ENCODE measurements at regions of chrX and their contacts with region 1.

Region 1: GRCh38 chrX:71198066-71198465 is 25.0 kb upstream of the GJB1 start:
- DNase-seq: peak in 3 of 10 donors; percentile 17 to 29 (median 22)
- ATAC-seq: peak; percentile 49 to 56
- H3K4me3 Mint-ChIP-seq: peak overlapping the region; percentile 78 to 94 (median 90)
- H3K27ac Mint-ChIP-seq: peak overlapping the region; percentile 86 to 98 (median 94)
- H3K4me1 Mint-ChIP-seq: peaks cover 15 to 35% (median 30%) of the 10 kb centered on the region in 4 donors
- H3K27me3 Mint-ChIP-seq: no peaks in the 10 kb centered on the region

Region 2: GRCh38 chrX:71283403-71284143 is 85.5 kb after region 1 on chrX and contains the start of gene NONO:
- POLR2A ChIA-PET with region 1: interaction called, 16 read pairs
- DNase-seq: peak; percentile 61 to 96 (median 86)
- ATAC-seq: peak; percentile 88 to 90
- H3K4me3 Mint-ChIP-seq: peak within 1 kb of the TSS; percentile 96 to 100 (median 99)
- H3K27ac Mint-ChIP-seq: peak within 1 kb of the TSS; percentile 99 to 100 (median 100)
- H3K4me1 Mint-ChIP-seq: peaks cover 1 to 32% (median 12%) of the 10 kb centered on the region in 4 donors
- H3K27me3 Mint-ChIP-seq: no peaks in the 10 kb centered on the region
- polyA plus RNA-seq, gene NONO: 177 to 199 (median 193) TPM